T-cell (primary cell): ENCODE measurements at regions of chr5 and their contacts with region 1.

Region 1: GRCh38 chr5:143002459-143003328 is 232.5 kb downstream of the ARHGAP26 start:
- DNase-seq: peak in 34 of 35 experiments; percentile 19 to 89 (median 58)
- ATAC-seq: peak; percentile 88 to 92 (median 90)
- H3K4me3 ChIP-seq: no peak overlapping the region
- H3K4me3 Mint-ChIP-seq: peak overlapping the region; percentile 49 to 63 (median 49)
- H3K27ac ChIP-seq: peak overlapping the region; percentile 97
- H3K27ac Mint-ChIP-seq: peak overlapping the region; percentile 96 to 97
- H3K4me1 ChIP-seq: peaks cover 34 to 63% of the 10 kb centered on the region in 2 experiments
- H3K4me1 Mint-ChIP-seq: peaks cover 44 to 89% (median 81%) of the 10 kb centered on the region in 3 donors
- H3K27me3 ChIP-seq: no peaks in the 10 kb centered on the region
- H3K27me3 Mint-ChIP-seq: no peaks in the 10 kb centered on the region

Region 2: GRCh38 chr5:143031781-143032580 is 29.3 kb after region 1 on chr5:
- CTCF ChIA-PET with region 1: interaction called, 3 to 11 read pairs
- POLR2A ChIA-PET with region 1: no interaction called
- DNase-seq: no peak
- ATAC-seq: no peak
- H3K4me3 ChIP-seq: no peak overlapping the region
- H3K4me3 Mint-ChIP-seq: no peak overlapping the region
- H3K27ac ChIP-seq: no peak overlapping the region
- H3K27ac Mint-ChIP-seq: no peak overlapping the region
- H3K4me1 ChIP-seq: peaks cover 13 to 24% of the 10 kb centered on the region in 2 experiments
- H3K4me1 Mint-ChIP-seq: peaks cover 30 to 40% (median 34%) of the 10 kb centered on the region in 3 donors
- H3K27me3 ChIP-seq: no peaks in the 10 kb centered on the region
- H3K27me3 Mint-ChIP-seq: no peaks in the 10 kb centered on the region